Body of pancreas (tissue), 4 donors: ENCODE measurements at regions of chr3 and their contacts with region 1.

Region 1: GRCh38 chr3:157493627-157494550 is 9.3 kb downstream of the VEPH1 start:
- DNase-seq: peak in 1 of 4 donors; percentile 6
- ATAC-seq: peak; percentile 59
- H3K4me3 ChIP-seq: no peak overlapping the region
- H3K27ac ChIP-seq: peak overlapping the region in 1 of 4 donors; percentile 4
- H3K4me1 ChIP-seq: peaks cover 11% of the 10 kb centered on the region
- H3K27me3 ChIP-seq: no peaks in the 10 kb centered on the region
- CTCF ChIP-seq: peak; percentile 47 to 71 (median 63)
- POLR2A ChIP-seq: no peak

Region 2: DNA sequence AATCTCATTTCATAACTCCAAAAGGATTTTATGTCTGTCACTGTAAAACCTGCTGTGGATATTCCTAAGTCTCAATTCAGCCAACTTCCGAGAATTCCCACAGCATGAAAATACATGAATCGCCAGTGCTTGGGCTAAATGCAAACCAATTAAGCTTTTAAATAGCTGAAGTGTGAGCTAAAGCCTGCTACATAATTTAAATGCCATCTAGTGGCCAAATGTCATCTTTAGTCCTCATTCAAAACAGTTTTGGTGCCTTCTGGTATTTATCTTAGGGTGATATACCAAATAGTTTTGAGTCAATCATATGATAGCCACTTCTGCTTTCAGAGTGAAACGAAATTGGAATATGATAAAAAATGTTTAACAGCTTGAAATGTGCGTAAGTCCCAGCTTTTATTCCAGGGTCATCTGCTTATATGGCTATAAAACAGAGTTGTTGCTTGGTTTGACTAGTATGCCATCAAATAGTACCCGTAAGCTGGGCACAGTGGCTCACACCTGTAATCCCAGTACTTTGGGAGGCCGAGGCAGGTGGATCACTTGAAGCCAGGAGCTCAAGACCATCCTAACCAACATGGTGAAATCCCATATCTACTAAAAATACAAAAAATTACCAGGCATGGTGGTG is 292.1 kb before region 1 on chr3:
- intact Hi-C with region 1: loop called (anchors 10 kb)
- DNase-seq: no peak
- ATAC-seq: peak; percentile 58
- H3K4me3 ChIP-seq: no peak overlapping the region
- H3K27ac ChIP-seq: no peak overlapping the region
- H3K4me1 ChIP-seq: peaks cover 7% of the 10 kb centered on the region
- H3K27me3 ChIP-seq: no peaks in the 10 kb centered on the region
- CTCF ChIP-seq: peak; percentile 28 to 66 (median 58)
- POLR2A ChIP-seq: no peak